Activated naive CD8-positive, alpha-beta T cell treated with anti-CD3 and anti-CD28 coated beads, Interleukin-2, amount 10 ng/mL, durations not matched to agents 7 days and 5 days (primary cell): ENCODE measurements at regions of chr1 and their contacts with region 1.

Region 1: GRCh38 chr1:35539073-35539823 is 18.0 kb downstream of the KIAA0319L start:
- DNase-seq: peak; percentile 40
- ATAC-seq: peak; percentile 97
- H3K4me3 Mint-ChIP-seq: peak overlapping the region; percentile 85
- H3K27ac Mint-ChIP-seq: peak overlapping the region; percentile 93
- H3K4me1 Mint-ChIP-seq: peaks cover 39% of the 10 kb centered on the region
- H3K27me3 Mint-ChIP-seq: no peaks in the 10 kb centered on the region

Region 2: DNA sequence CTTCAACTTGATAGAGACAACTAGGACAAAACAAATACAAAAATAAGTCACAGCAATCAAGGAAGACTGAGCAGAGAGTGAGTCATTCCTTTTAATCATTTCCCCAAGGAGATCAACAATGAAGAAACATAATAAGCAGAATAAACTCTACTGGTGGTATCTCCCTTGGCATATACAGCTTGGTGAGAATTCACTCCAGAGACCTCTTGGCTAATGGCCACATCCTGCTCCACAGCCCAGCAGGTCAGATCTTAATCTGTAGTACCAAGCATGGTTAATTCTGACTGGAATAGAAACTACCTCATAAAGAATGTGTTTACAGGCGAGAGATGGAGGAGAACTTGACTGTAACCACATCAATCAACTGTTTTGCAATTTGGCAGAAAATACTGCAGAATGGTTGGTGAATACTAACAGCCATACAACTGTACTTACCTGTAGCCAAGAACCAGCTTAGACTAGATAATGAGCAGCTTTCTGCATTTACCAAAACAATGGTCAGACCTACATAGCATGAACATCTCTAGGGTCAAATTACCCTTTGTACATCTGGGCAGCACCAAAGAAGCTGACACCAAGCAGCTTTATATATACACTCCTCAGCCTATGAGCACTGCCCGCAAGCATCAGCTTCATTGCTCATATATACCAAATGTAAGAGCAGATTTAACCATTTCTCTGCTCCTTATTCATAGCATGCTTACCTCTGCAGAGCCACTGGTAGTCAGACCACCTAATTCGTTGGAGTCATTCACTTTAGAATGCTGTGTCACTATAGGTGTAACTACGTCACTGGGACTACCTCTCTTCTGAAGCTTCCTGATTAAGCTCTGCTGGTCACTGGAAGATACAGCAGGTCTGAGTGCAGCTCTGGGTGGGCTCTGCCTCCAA is 33.1 kb before region 1 on chr1:
- POLR2A ChIA-PET with region 1: interaction called, 14 read pairs
- DNase-seq: peak; percentile 48
- ATAC-seq: peak; percentile 87
- H3K4me3 Mint-ChIP-seq: peak overlapping the region; percentile 84
- H3K27ac Mint-ChIP-seq: peak overlapping the region; percentile 94
- H3K4me1 Mint-ChIP-seq: peaks cover 44% of the 10 kb centered on the region
- H3K27me3 Mint-ChIP-seq: no peaks in the 10 kb centered on the region

Region 3: GRCh38 chr1:35524106-35524505 is 15.1 kb before region 1 on chr1:
- POLR2A ChIA-PET with region 1: no interaction called
- DNase-seq: no peak
- ATAC-seq: no peak
- H3K4me3 Mint-ChIP-seq: no peak overlapping the region
- H3K27ac Mint-ChIP-seq: no peak overlapping the region
- H3K4me1 Mint-ChIP-seq: peaks cover 3% of the 10 kb centered on the region
- H3K27me3 Mint-ChIP-seq: no peaks in the 10 kb centered on the region

Region 4: DNA sequence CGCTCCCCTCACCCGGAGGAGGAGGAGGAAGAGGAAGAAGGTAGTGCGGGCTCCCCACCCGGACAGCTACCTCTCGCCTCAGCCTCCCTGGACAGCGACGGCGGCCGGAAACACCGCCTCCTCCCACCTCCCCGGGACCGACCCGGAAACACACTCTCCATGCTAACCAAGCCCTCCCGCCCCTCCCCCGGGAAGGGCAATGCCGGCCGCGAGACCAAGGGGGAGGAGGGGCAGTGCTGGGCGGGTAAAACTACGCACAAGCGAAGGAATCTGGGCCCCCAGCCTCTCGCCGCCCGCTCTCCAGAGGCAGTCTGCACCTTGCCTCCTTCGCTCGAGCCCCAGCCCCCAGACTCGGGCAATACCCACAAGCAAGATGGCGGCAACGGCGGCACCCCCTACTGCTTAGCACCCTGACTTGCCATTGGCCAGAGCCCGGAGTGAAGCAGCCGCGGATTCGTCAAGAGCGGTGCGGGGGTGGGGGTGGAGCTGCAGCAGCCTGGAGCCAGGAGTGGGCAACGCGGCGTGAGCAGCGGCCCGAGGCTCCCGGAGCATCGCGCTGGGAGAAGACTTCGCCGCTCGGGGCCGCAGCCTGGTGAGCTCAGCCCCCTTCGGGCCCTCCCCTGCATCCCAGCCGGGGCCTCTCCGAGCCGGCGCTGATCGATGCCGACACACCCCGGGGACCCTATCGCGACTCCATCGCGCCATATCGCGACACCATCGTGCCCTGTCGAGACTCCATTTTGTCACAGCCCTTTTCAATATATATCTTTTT is 18.2 kb after region 1 on chr1 and contains the starts of genes KIAA0319L and NCDN:
- POLR2A ChIA-PET with region 1: interaction called, 21 read pairs
- DNase-seq: peak; percentile 94
- ATAC-seq: peak; percentile 95
- H3K4me3 Mint-ChIP-seq: peak within 1 kb of the TSS; percentile 92
- H3K27ac Mint-ChIP-seq: peak within 1 kb of the TSS; percentile 96
- H3K4me1 Mint-ChIP-seq: peaks cover 33% of the 10 kb centered on the region
- H3K27me3 Mint-ChIP-seq: no peaks in the 10 kb centered on the region
- total RNA-seq, gene KIAA0319L: 49.8 to 51.8 TPM
- total RNA-seq, gene NCDN: 21.5 to 23.2 TPM